A549 (cell line): ENCODE measurements at regions of chr9 and their contacts with region 1.

Region 1: GRCh38 chr9:35891646-35892045 is 14.4 kb upstream of the HRCT1 start:
- DNase-seq: no peak
- ATAC-seq: no peak
- H3K4me3 ChIP-seq: no peak overlapping the region
- H3K27ac ChIP-seq: no peak overlapping the region
- H3K4me1 ChIP-seq: no peaks in the 10 kb centered on the region
- CTCF ChIP-seq: no peak
- EP300 ChIP-seq: no peak
- POLR2A ChIP-seq: no peak
- RAD21 ChIP-seq: no peak

Region 2: GRCh38 chr9:35910613-35911359 is 19.1 kb after region 1 on chr9:
- CTCF ChIA-PET with region 1: interaction called, 39 read pairs
- POLR2A ChIA-PET with region 1: no interaction called
- DNase-seq: peak; percentile 79 to 82
- ATAC-seq: peak in 1 of 2 experiments; percentile 22; a peak in 3 of 6 replicates
- H3K4me3 ChIP-seq: no peak overlapping the region
- H3K27ac ChIP-seq: peak overlapping the region; percentile 93 to 99
- H3K4me1 ChIP-seq: peaks cover 49% of the 10 kb centered on the region
- CTCF ChIP-seq: peak; percentile 80
- EP300 ChIP-seq: no peak
- POLR2A ChIP-seq: no peak
- RAD21 ChIP-seq: peak; percentile 86 to 87